ENCODE measurements at regions of chr22 and their contacts with region 1.

Region 1: DNA sequence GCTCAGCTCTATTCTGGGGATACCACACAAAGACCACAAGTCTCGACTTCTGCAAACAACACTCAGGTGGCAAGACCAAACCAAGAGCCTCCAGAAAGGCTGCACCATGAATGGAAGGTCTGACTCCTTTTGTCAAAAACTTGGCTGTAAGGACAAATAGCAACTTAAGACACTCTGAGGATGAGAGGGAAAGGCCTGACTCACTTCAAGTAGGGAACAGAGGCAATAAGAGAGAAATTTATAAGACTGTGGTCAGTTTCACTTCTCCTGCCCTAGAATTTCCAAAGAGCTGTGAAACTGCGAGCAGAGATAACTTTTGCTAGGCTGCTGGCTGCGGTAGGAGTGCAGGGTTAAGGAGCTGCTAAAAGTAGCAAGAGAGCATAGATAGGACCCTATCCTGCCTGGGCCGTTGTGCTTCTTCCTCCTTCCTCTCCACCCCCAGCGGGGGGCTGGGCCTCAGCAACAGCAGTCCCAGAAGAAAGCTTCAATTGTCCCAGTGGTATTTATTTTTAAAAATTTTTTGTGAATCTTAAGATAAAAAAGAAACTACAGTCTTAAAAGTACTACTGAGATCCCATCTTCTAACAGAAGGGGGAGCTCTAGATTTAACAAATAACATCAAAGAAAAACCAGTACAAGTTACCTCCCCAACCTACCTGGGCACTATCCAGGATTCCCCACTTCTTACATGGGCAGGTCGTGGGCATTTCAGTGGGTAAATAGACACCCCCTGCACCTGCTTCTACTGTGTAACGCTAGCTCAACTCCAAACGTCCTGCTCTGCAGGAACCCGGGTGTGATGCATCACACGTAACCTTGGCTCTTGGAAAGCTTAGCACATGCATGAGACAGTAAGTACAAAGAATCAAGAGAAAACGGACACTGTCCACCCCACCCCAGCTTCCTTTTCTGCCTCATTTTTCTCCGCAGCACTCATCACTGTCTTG is 66.4 kb downstream of the SGSM3 start:
- H3K4me3 ChIP-seq: no peak overlapping the region
- H3K27ac ChIP-seq: no peak overlapping the region
- H3K4me1 ChIP-seq: no peaks in the 10 kb centered on the region
- CTCF ChIP-seq: no peak

Region 2: GRCh38 chr22:40449676-40450035 is 12.9 kb after region 1 on chr22:
- CTCF ChIA-PET with region 1: interaction called, 72 read pairs
- POLR2A ChIA-PET with region 1: no interaction called
- H3K4me3 ChIP-seq: no peak overlapping the region
- H3K27ac ChIP-seq: no peak overlapping the region
- H3K4me1 ChIP-seq: peaks cover 18% of the 10 kb centered on the region
- CTCF ChIP-seq: no peak

Region 3: GRCh38 chr22:40479126-40479800 is 42.5 kb after region 1 on chr22:
- CTCF ChIA-PET with region 1: interaction called, 20 read pairs
- POLR2A ChIA-PET with region 1: interaction called, 5 read pairs
- H3K4me3 ChIP-seq: no peak overlapping the region
- H3K27ac ChIP-seq: no peak overlapping the region
- H3K4me1 ChIP-seq: peaks cover 3% of the 10 kb centered on the region; the same call in 1 of the 2 replicates
- CTCF ChIP-seq: no peak

Region 4: DNA sequence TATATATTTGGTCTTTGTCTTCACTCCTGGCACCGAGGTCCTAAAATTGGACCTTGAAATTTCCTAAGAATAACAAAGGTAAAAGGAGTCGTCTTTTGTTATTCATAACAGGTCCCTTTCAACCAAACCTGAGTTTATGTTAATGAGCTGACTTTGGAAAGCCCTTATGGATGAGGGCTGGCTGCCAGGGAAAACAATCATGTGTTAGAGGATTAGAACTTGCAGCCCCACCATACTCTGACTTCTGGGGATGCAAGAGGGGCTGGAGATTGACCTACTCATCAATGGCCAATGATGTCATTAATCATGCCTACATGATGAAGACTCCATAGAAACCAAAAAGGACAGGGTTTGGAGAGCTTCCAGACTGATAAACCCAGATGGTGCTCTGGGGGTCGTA is 80.9 kb after region 1 on chr22:
- CTCF ChIA-PET with region 1: interaction called, 12 read pairs
- POLR2A ChIA-PET with region 1: no interaction called
- H3K4me3 ChIP-seq: no peak overlapping the region
- H3K27ac ChIP-seq: no peak overlapping the region
- H3K4me1 ChIP-seq: peaks cover 15% of the 10 kb centered on the region
- CTCF ChIP-seq: no peak

Region 5: GRCh38 chr22:40533712-40534378 is 97.1 kb after region 1 on chr22:
- CTCF ChIA-PET with region 1: interaction called, 15 read pairs
- POLR2A ChIA-PET with region 1: no interaction called
- H3K4me3 ChIP-seq: peak overlapping the region; percentile 27
- H3K27ac ChIP-seq: peak overlapping the region; percentile 81
- H3K4me1 ChIP-seq: peaks cover 37% of the 10 kb centered on the region
- CTCF ChIP-seq: no peak

Region 6: DNA sequence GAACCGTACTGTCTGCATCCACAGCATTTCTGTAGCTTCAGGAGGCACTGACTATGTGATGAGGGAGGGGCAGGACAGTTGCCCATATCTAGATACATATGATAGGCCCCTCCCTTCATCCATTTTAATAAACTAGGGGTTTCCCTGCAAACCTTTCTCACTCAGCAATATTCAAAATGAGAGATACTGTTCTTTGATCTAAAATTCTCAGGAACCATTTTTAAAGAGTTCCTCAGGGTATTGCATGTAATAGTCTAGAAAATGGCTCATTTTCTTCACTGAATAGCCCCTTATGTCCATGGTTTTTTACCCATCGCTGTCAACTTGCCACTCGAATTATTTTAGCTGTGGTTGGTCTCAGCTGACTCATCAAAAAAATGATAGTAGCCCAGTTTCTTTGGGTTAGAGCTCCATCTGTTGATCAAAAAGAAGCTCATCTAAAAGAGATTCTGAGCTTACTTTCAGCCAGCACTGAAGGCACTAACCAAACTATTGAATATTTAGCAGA is 462.1 kb after region 1 on chr22:
- CTCF ChIA-PET with region 1: interaction called, 19 read pairs
- POLR2A ChIA-PET with region 1: no interaction called
- H3K4me3 ChIP-seq: no peak overlapping the region
- H3K27ac ChIP-seq: no peak overlapping the region
- H3K4me1 ChIP-seq: no peaks in the 10 kb centered on the region
- CTCF ChIP-seq: 0 out of 2 replicates have a peak, but pooled peaks have one; percentile 37

Measured in HEK293 (cell line).